ENCODE measurements at regions of chr1 and their contacts with region 1.

Region 1: GRCh38 chr1:61842871-61843514 is 100.7 kb downstream of the PATJ start:
- DNase-seq: no peak
- ATAC-seq: no peak

Region 2: GRCh38 chr1:60978421-60979357 is 864.3 kb before region 1 on chr1:
- intact Hi-C with region 1: loop called (anchors 10 kb)
- DNase-seq: no peak
- ATAC-seq: no peak

Region 3: GRCh38 chr1:61343734-61344420 is 499.1 kb before region 1 on chr1:
- intact Hi-C with region 1: loop called (anchors 5 kb)
- DNase-seq: no peak
- ATAC-seq: peak; percentile 54